Panc1 (cell line): ENCODE measurements at regions of chr1 and their contacts with region 1.

Region 1: GRCh38 chr1:93447516-93448291 is at the start of gene FNBP1L:
- DNase-seq: no peak
- ATAC-seq: peak; percentile 91
- H3K4me3 ChIP-seq: peak within 1 kb of the TSS; percentile 85 to 86
- H3K27ac ChIP-seq: peak within 1 kb of the TSS; percentile 85
- H3K4me1 ChIP-seq: peaks cover 6% of the 10 kb centered on the region
- H3K27me3 ChIP-seq: no peaks in the 10 kb centered on the region
- CTCF ChIP-seq: no peak
- total RNA-seq, gene FNBP1L: 25.1 TPM

Region 2: DNA sequence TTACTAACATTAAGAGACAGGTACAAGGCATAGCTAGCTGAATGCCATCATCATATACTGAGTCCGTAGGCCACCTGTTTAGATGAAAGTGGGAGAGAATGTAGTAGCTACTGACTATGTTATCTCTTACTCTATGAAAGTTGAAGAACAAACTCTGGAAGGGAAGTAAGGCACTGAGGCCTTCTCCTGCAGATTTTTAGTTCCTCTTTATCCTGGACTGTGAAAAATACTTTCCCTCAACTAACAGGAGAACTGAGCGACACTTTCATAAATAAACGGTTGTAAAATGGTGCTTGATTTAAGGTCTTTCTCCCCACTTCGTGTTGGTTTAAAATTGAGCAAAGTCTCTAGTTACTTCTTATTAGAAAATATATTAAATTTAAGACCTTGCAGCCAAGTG is 102.1 kb after region 1 on chr1:
- CTCF ChIA-PET with region 1: no interaction called
- POLR2A ChIA-PET with region 1: no interaction called
- in situ Hi-C with region 1: no loop called
- intact Hi-C with region 1: loop called (anchors 10 kb)
- DNase-seq: no peak
- ATAC-seq: no peak
- H3K4me3 ChIP-seq: no peak overlapping the region
- H3K27ac ChIP-seq: no peak overlapping the region
- H3K4me1 ChIP-seq: peaks cover 22% of the 10 kb centered on the region
- H3K27me3 ChIP-seq: no peaks in the 10 kb centered on the region
- CTCF ChIP-seq: no peak